CD8-positive, alpha-beta T cell (primary cell): ENCODE measurements at regions of chr6 and their contacts with region 1.

Region 1: GRCh38 chr6:125956506-125957390 is at the start of gene HINT3:
- DNase-seq: peak; percentile 95 to 99 (median 98)
- ATAC-seq: peak; percentile 88
- H3K4me3 ChIP-seq: peak within 1 kb of the TSS; percentile 79 to 93
- H3K4me3 Mint-ChIP-seq: no peak within 1 kb of the TSS
- H3K27ac ChIP-seq: peak within 1 kb of the TSS; percentile 97 to 98
- H3K27ac Mint-ChIP-seq: no peak within 1 kb of the TSS
- H3K4me1 ChIP-seq: peaks cover 26% of the 10 kb centered on the region
- H3K4me1 Mint-ChIP-seq: peaks cover 9% of the 10 kb centered on the region
- H3K27me3 ChIP-seq: no peaks in the 10 kb centered on the region
- H3K27me3 Mint-ChIP-seq: peaks cover 6% of the 10 kb centered on the region
- CTCF ChIP-seq: peak; percentile 96
- total RNA-seq, gene HINT3: 14.2 to 15.4 TPM

Region 2: GRCh38 chr6:125301435-125302391 is 655.0 kb before region 1 on chr6 and contains the start of gene HDDC2:
- CTCF ChIA-PET with region 1: no interaction called
- POLR2A ChIA-PET with region 1: no interaction called
- intact Hi-C with region 1: loop called (anchors 2 to 10 kb)
- DNase-seq: peak in 8 of 9 experiments; percentile 27 to 67 (median 44)
- ATAC-seq: peak; percentile 43
- H3K4me3 ChIP-seq: peak within 1 kb of the TSS; percentile 65 to 70
- H3K4me3 Mint-ChIP-seq: peak within 1 kb of the TSS; percentile 82
- H3K27ac ChIP-seq: peak within 1 kb of the TSS; percentile 58 to 83
- H3K27ac Mint-ChIP-seq: peak within 1 kb of the TSS; percentile 88
- H3K4me1 ChIP-seq: peaks cover 39% of the 10 kb centered on the region
- H3K4me1 Mint-ChIP-seq: peaks cover 57% of the 10 kb centered on the region
- H3K27me3 ChIP-seq: no peaks in the 10 kb centered on the region
- H3K27me3 Mint-ChIP-seq: peaks cover 4% of the 10 kb centered on the region
- CTCF ChIP-seq: no peak
- total RNA-seq, gene HDDC2: 16.2 to 24.9 TPM

Region 3: GRCh38 chr6:125986300-125987025 is 29.7 kb after region 1 on chr6 and contains the start of gene TRMT11:
- CTCF ChIA-PET with region 1: interaction called, 8 read pairs
- POLR2A ChIA-PET with region 1: interaction called, 34 read pairs
- intact Hi-C with region 1: loop called in 1 of 2 experiments (anchors 1 kb)
- DNase-seq: peak; percentile 63 to 92 (median 79)
- ATAC-seq: peak; percentile 95
- H3K4me3 ChIP-seq: peak within 1 kb of the TSS; percentile 75 to 95
- H3K4me3 Mint-ChIP-seq: peak within 1 kb of the TSS; percentile 35
- H3K27ac ChIP-seq: peak within 1 kb of the TSS; percentile 77 to 84
- H3K27ac Mint-ChIP-seq: no peak within 1 kb of the TSS
- H3K4me1 ChIP-seq: peaks cover 31% of the 10 kb centered on the region
- H3K4me1 Mint-ChIP-seq: peaks cover 15% of the 10 kb centered on the region
- H3K27me3 ChIP-seq: no peaks in the 10 kb centered on the region
- H3K27me3 Mint-ChIP-seq: no peaks in the 10 kb centered on the region
- CTCF ChIP-seq: no peak
- total RNA-seq, gene TRMT11: 19.0 to 19.4 TPM

Region 4: GRCh38 chr6:126077810-126078776 is 121.3 kb after region 1 on chr6:
- CTCF ChIA-PET with region 1: no interaction called
- POLR2A ChIA-PET with region 1: no interaction called
- intact Hi-C with region 1: no loop called
- DNase-seq: no peak
- ATAC-seq: no peak
- H3K4me3 ChIP-seq: no peak overlapping the region
- H3K4me3 Mint-ChIP-seq: no peak overlapping the region
- H3K27ac ChIP-seq: no peak overlapping the region
- H3K27ac Mint-ChIP-seq: no peak overlapping the region
- H3K4me1 ChIP-seq: no peaks in the 10 kb centered on the region
- H3K4me1 Mint-ChIP-seq: no peaks in the 10 kb centered on the region
- H3K27me3 ChIP-seq: no peaks in the 10 kb centered on the region
- H3K27me3 Mint-ChIP-seq: no peaks in the 10 kb centered on the region
- CTCF ChIP-seq: no peak